ENCODE measurements at regions of chr19 and their contacts with region 1.

Region 1: GRCh38 chr19:1383311-1384084 is at the start of gene NDUFS7:
- DNase-seq: peak; percentile 87 to 100 (median 95)
- ATAC-seq: peak; percentile 95
- H3K4me3 ChIP-seq: peak within 1 kb of the TSS; percentile 92
- H3K4me3 Mint-ChIP-seq: peak within 1 kb of the TSS; percentile 87 to 99 (median 94)
- H3K27ac ChIP-seq: peak within 1 kb of the TSS; percentile 76
- H3K27ac Mint-ChIP-seq: peak within 1 kb of the TSS; percentile 98 to 100 (median 100)
- H3K4me1 ChIP-seq: peaks cover 5 to 9% of the 10 kb centered on the region in 2 donors
- H3K4me1 Mint-ChIP-seq: peaks cover 12 to 31% (median 22%) of the 10 kb centered on the region in 7 donors
- H3K27me3 ChIP-seq: no peaks in the 10 kb centered on the region
- H3K27me3 Mint-ChIP-seq: peaks cover 0 to 10% (median 3%) of the 10 kb centered on the region in 5 donors
- total RNA-seq, gene NDUFS7: 48.4 to 101 (median 68.0) TPM

Region 2: GRCh38 chr19:1249298-1249989 is 134.1 kb before region 1 on chr19:
- CTCF ChIA-PET with region 1: interaction called, 5 read pairs
- POLR2A ChIA-PET with region 1: no interaction called
- intact Hi-C with region 1: loop called in 1 of 2 experiments (anchors 1 kb)
- DNase-seq: peak; percentile 88 to 97 (median 94)
- ATAC-seq: peak; percentile 74
- H3K4me3 ChIP-seq: peak overlapping the region; percentile 63
- H3K4me3 Mint-ChIP-seq: peak overlapping the region; percentile 80 to 95 (median 88)
- H3K27ac ChIP-seq: peak overlapping the region; percentile 94
- H3K27ac Mint-ChIP-seq: peak overlapping the region; percentile 62 to 95 (median 89)
- H3K4me1 ChIP-seq: peaks cover 22 to 27% of the 10 kb centered on the region in 2 donors
- H3K4me1 Mint-ChIP-seq: peaks cover 0 to 11% (median 10%) of the 10 kb centered on the region in 7 donors
- H3K27me3 ChIP-seq: no peaks in the 10 kb centered on the region
- H3K27me3 Mint-ChIP-seq: no peaks in the 10 kb centered on the region

Region 3: DNA sequence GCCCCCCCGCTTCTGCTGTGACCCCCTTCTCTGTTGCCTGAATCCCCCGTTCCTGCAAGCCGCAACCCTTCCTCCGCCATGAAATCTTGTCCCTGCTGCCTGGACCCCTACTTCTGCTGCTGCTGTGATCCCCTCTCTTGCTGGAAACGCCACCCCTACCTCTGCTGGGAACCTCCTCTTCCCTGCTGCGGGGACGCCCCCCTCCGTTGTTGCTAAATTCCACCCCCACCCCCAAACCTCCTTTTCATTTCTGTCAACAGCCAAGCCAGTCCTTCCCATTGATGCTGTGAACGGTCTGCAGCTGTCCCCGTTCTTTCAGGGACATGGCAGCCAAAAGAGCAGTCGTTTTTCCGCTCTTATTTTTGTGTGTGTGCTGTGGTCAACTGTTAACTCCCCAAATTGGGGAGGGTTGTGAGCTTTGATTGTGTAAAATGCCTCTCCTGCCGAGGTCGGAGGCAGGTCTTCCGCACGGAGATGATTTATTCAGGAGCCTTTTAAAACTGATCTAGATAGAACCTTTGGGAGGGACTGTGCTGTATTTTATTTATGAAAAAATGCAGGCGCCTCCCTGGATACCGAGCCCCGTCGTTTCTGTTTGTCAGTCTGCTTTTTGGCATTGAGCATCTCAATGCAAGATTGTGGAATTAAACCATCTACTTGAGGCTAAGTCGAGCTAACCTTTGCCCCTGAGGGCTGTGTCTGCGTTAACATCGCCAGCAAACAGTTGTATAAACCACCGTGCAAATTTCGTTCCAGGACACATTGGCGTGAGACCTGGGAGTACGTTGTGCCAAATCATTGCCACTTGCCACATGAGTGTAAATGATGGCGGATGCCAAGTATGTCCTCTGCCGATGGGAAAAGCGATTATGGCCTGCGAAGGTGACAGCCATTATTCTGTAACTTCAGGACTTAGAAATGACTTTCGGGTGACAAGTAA is 27.7 kb before region 1 on chr19:
- CTCF ChIA-PET with region 1: no interaction called
- POLR2A ChIA-PET with region 1: interaction called, 4 read pairs
- intact Hi-C with region 1: loop called (anchors 1 to 2 kb)
- DNase-seq: no peak
- ATAC-seq: no peak
- H3K4me3 ChIP-seq: peak overlapping the region; percentile 60
- H3K4me3 Mint-ChIP-seq: peak overlapping the region; percentile 74 to 98 (median 90)
- H3K27ac ChIP-seq: peak overlapping the region; percentile 59
- H3K27ac Mint-ChIP-seq: peak overlapping the region in 8 of 9 donors; percentile 50 to 86 (median 78)
- H3K4me1 ChIP-seq: peaks cover 5 to 6% of the 10 kb centered on the region in 2 donors
- H3K4me1 Mint-ChIP-seq: peaks cover 9 to 24% (median 18%) of the 10 kb centered on the region in 7 donors
- H3K27me3 ChIP-seq: no peaks in the 10 kb centered on the region
- H3K27me3 Mint-ChIP-seq: no peaks in the 10 kb centered on the region

Region 4: DNA sequence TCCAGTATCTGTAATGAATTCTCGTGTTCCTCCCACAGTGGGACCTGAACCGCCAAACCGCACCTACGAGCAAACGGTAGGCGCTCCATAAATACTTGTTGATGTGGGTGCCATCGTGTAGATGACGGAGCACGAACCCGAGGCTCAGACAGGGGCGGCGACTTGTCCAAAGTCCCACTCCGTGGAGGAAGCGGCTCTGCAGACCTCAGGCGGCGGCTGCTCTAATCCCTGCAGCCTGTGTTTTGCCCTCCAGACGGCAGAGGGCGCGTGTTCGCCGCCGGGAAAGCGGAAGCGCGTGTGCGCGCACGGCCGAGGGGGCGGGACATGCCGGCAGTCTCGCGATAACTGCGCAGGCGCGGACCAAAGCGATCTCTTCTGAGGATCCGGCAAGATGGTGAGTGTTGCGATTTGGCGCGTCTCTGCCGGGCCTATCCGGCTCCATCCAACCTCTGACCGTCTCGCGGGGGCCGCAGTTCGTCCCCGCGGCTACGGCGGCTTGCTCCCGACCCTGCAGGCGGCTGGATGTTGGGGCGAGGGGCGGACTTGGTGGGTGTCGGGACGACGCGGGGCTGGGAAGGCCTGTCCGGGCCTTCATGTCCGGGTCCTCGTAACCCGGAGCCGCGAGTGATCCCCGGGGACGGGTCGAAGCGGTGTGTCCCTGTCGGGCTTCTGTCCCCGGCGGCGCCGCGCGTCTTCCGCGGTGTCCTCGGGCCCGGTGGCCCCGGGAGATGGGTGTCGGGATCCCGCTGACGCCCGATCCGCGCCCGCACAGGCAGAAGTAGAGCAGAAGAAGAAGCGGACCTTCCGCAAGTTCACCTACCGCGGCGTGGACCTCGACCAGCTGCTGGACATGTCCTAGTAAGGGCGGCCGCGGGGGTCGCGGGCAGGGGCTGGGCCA is 54.8 kb after region 1 on chr19 and contains the start of gene RPS15:
- CTCF ChIA-PET with region 1: no interaction called
- POLR2A ChIA-PET with region 1: interaction called, 3 read pairs
- intact Hi-C with region 1: loop called in 1 of 2 experiments (anchors 1 kb)
- DNase-seq: peak; percentile 92 to 98 (median 96)
- ATAC-seq: peak; percentile 97
- H3K4me3 ChIP-seq: peak within 1 kb of the TSS; percentile 82
- H3K4me3 Mint-ChIP-seq: peak within 1 kb of the TSS; percentile 87 to 99 (median 98)
- H3K27ac ChIP-seq: peak within 1 kb of the TSS; percentile 92
- H3K27ac Mint-ChIP-seq: peak within 1 kb of the TSS; percentile 96 to 100 (median 99)
- H3K4me1 ChIP-seq: peaks cover 8 to 11% of the 10 kb centered on the region in 2 donors
- H3K4me1 Mint-ChIP-seq: peaks cover 9 to 34% (median 15%) of the 10 kb centered on the region in 7 donors
- H3K27me3 ChIP-seq: no peaks in the 10 kb centered on the region
- H3K27me3 Mint-ChIP-seq: no peaks in the 10 kb centered on the region
- total RNA-seq, gene RPS15: 1,300 to 2,097 (median 2,012) TPM

Region 5: DNA sequence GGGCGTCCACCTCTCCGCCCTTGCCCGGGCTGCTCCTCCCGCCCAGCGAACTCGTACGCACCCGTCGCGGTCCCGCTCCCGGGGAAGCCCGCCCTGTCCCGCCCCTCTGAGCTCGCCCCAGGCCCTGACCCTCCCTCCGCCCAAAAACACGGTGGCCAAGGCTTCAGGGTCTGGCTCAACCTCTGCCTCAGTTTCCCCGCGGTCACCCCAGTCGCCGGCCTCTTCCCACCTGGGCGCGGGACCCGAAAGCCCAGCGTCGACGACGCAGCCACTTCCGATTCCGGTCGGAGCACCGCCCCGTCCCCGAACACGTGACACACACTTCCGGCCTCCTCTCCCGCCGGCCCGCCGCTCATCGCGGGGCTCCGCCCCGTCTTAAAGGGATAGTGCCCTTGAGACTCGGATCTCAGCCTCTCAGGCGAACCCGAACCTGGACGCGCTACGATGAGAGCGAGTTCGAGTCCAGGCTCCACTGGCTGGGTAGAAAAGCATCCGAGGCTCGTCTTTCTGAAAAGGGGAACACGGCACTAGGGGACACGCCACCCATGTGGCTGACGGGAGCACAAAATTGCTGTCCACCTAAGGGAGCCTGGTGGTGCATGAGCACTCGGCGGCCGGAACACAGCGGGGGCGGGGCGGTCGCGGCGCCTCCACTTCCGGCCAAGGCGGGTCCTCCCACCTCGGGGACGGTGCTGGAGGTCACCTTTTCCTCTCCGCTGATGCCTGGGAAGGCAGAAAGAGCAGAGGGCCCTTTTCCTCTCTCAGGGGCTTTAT is 95.6 kb after region 1 on chr19 and contains the start of gene C19orf25:
- CTCF ChIA-PET with region 1: no interaction called
- POLR2A ChIA-PET with region 1: no interaction called
- intact Hi-C with region 1: loop called in 1 of 2 experiments (anchors 1 kb)
- DNase-seq: peak; percentile 81 to 94 (median 88)
- ATAC-seq: peak; percentile 98
- H3K4me3 ChIP-seq: peak within 1 kb of the TSS; percentile 82
- H3K4me3 Mint-ChIP-seq: peak within 1 kb of the TSS; percentile 96 to 100 (median 98)
- H3K27ac ChIP-seq: peak within 1 kb of the TSS; percentile 86
- H3K27ac Mint-ChIP-seq: peak within 1 kb of the TSS; percentile 94 to 98 (median 96)
- H3K4me1 ChIP-seq: peaks cover 6 to 12% of the 10 kb centered on the region in 2 donors
- H3K4me1 Mint-ChIP-seq: peaks cover 11 to 24% (median 15%) of the 10 kb centered on the region in 7 donors
- H3K27me3 ChIP-seq: no peaks in the 10 kb centered on the region
- H3K27me3 Mint-ChIP-seq: peaks cover 0 to 3% (median 0%) of the 10 kb centered on the region in 5 donors
- total RNA-seq, gene C19orf25: 24.2 to 64.5 (median 44.6) TPM

Measured in naive thymus-derived CD4-positive, alpha-beta T cell (primary cell).